ENCODE measurements at regions of chr13 and their contacts with region 1.

Region 1: DNA sequence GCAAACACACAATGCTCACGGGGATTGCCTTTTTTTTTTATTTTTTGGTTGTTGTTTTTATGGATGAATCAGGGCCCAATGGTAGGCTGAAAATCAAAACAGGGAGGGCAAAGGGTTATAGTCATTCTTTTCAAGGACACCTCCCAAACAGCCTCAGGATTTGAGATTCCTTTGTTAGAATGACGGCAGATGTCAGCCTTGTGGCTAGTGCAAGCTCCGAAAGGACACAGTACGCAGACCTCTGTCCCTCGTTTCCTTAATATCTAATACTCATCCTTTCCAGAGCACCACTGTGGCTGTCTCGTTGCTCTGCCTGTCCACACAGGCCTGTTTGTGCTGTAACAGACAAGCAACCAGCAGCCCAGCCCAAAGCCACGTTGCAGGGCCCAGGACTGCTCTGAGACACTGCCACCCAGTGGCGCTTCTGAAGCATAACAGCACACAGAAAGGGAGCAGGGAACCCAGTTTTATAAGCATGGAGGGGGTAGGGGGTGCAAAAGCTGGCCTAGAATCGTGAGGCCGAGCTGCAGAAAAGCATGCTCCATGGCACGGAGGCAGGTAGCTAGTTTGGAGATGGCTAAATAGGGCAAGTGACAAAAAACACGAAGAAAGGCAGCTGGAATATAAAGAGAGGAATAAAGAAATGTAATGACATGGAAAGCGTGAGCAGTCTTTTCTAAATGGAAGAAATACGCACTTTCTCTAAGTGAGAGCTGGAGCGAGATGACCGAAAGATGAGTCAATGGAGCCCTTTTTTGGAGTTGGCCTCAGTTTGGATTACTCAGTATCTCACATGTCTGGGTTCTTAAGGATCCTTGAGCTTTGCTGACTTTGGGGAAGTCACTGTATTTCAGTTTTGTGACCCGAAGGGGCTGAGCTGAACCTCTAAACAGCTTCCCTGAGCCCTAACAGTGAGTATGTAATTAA is 40.7 kb upstream of the MEDAG start:
- DNase-seq: no peak
- H3K4me3 ChIP-seq: peak overlapping the region in 2 of 4 donors; percentile 4 to 18
- H3K27ac ChIP-seq: peak overlapping the region; percentile 84 to 90 (median 89)
- H3K4me1 ChIP-seq: peaks cover 33 to 62% (median 60%) of the 10 kb centered on the region in 4 donors
- H3K27me3 ChIP-seq: no peaks in the 10 kb centered on the region
- CTCF ChIP-seq: peak; percentile 92 to 95 (median 95)
- EP300 ChIP-seq: no peak
- POLR2A ChIP-seq: no peak

Region 2: DNA sequence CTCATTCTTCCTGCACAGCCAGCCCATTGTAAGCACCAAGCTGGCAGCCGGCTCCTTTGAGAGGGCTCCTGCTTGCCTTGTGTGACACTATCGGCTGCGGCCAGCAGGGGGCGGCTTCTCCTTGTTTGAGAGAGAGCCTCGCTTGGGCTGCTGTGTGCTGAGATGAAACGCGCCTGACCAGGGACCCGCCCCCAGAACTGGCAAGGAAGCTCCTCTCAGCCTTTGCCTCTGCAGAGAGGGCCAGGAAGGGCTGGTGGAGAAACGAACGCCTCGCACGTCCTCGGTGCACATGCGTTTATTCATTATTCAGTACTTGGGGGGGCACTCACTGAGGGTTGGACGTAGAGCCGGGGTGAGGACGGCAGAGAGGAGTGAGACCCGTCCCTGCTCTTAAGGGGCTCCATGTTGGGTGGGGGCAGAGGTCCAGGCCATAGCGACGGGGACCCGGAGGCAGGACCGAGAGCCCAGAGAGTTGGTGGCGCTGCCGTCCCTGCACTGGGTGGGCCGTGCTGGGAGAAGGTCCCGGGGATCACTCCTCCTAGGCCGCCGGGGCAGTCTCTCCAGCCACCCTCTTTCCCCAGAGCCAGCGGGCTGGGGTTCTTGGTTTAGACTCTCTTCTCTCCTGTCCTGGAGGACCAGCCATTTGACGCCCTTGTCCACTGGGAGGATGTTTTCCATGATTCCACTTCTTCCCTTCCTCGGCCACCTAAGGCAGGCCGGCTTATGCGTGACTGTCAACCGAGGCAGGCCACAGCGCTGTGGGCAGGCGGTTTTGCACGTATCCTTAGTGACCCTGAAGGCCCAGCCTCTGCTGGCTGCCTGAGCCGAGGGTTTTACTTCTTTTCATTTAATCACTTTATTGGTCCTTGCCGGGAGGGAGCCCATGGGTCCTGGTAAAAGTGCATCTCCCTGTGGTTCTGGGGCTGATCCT is 732.5 kb before region 1 on chr13:
- intact Hi-C with region 1: loop called (anchors 10 kb)
- DNase-seq: peak; percentile 99
- H3K4me3 ChIP-seq: peak overlapping the region in 2 of 4 donors; percentile 14 to 27
- H3K27ac ChIP-seq: no peak overlapping the region
- H3K4me1 ChIP-seq: peaks cover 6 to 22% (median 17%) of the 10 kb centered on the region in 4 donors
- H3K27me3 ChIP-seq: no peaks in the 10 kb centered on the region
- CTCF ChIP-seq: peak; percentile 94 to 95 (median 95)
- EP300 ChIP-seq: no peak
- POLR2A ChIP-seq: no peak

Region 3: GRCh38 chr13:30408319-30409101 is 456.9 kb before region 1 on chr13:
- intact Hi-C with region 1: loop called (anchors 10 kb)
- DNase-seq: peak; percentile 98
- H3K4me3 ChIP-seq: peak overlapping the region; percentile 48 to 52 (median 50)
- H3K27ac ChIP-seq: peak overlapping the region; percentile 81 to 91 (median 86)
- H3K4me1 ChIP-seq: peaks cover 11 to 49% (median 36%) of the 10 kb centered on the region in 4 donors
- H3K27me3 ChIP-seq: no peaks in the 10 kb centered on the region
- CTCF ChIP-seq: peak; percentile 85 to 96 (median 96)
- EP300 ChIP-seq: no peak
- POLR2A ChIP-seq: no peak

Region 4: GRCh38 chr13:30617315-30618185 is 247.8 kb before region 1 on chr13 and contains the start of gene USPL1:
- intact Hi-C with region 1: loop called (anchors 5 kb)
- DNase-seq: peak; percentile 99
- H3K4me3 ChIP-seq: peak within 1 kb of the TSS; percentile 78 to 95 (median 90)
- H3K27ac ChIP-seq: peak within 1 kb of the TSS; percentile 97 to 100 (median 99)
- H3K4me1 ChIP-seq: peaks cover 15 to 40% (median 39%) of the 10 kb centered on the region in 4 donors
- H3K27me3 ChIP-seq: no peaks in the 10 kb centered on the region
- CTCF ChIP-seq: peak in 2 of 3 experiments; percentile 38 to 45
- EP300 ChIP-seq: peak; percentile 23
- POLR2A ChIP-seq: peak; percentile 92
- total RNA-seq, gene USPL1: 13.2 to 21.6 (median 19.4) TPM

Region 5: GRCh38 chr13:30679483-30680330 is 185.7 kb before region 1 on chr13:
- intact Hi-C with region 1: loop called (anchors 5 kb)
- DNase-seq: no peak
- H3K4me3 ChIP-seq: no peak overlapping the region
- H3K27ac ChIP-seq: no peak overlapping the region
- H3K4me1 ChIP-seq: peaks cover 0 to 14% (median 10%) of the 10 kb centered on the region in 4 donors
- H3K27me3 ChIP-seq: no peaks in the 10 kb centered on the region
- CTCF ChIP-seq: peak; percentile 57 to 67 (median 64)
- EP300 ChIP-seq: no peak
- POLR2A ChIP-seq: no peak

Region 6: GRCh38 chr13:30796132-30796572 is 69.2 kb before region 1 on chr13:
- intact Hi-C with region 1: no loop called
- DNase-seq: no peak
- H3K4me3 ChIP-seq: peak overlapping the region; percentile 21 to 37 (median 24)
- H3K27ac ChIP-seq: peak overlapping the region in 1 of 4 donors; percentile 16
- H3K4me1 ChIP-seq: peaks cover 0 to 36% (median 33%) of the 10 kb centered on the region in 4 donors
- H3K27me3 ChIP-seq: no peaks in the 10 kb centered on the region
- CTCF ChIP-seq: no peak
- EP300 ChIP-seq: no peak
- POLR2A ChIP-seq: no peak

Region 7: DNA sequence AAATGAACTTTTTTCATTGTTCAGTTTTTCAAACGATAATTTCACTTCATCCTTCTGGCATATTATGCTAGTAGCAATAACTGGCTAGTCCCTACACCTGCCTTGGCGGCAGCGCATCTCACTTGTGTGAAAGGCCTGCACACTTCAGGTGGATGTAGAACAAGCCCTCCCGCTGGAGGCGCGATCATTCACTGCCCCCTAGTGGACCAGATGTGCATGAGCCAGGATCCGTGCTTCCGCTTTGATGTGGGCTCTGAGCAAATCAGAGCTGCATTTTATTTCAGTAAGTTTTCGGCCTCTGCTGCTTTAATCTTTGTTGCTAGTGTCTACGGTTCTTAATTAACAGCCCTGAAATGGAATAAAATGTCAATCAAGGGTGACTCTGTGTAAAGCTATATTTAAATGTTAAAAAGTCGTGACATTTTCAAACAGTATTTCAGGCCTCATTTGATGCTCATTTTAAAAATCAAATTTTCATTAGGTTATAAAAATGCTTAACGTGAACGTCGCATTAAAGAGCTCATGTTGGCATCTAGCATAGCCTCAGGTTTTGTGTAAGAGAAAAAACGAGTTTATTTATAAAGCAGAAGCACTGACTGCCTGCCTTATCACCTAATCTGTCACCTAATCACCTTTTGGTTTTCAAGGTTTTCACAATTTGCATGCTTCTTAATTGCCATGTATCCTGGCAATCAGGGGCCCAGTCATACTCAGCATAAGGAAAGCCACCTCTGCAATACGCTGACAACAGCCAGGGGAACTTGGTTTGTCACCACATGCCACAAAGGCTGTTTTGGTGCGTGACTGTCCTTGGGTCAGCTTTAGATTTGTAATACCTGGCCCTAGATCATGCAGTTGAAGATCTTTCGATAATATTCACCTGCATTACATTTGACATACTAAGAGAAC is 179.2 kb after region 1 on chr13:
- intact Hi-C with region 1: loop called (anchors 5 kb)
- DNase-seq: peak; percentile 97
- H3K4me3 ChIP-seq: no peak overlapping the region
- H3K27ac ChIP-seq: no peak overlapping the region
- H3K4me1 ChIP-seq: peaks cover 23 to 35% (median 30%) of the 10 kb centered on the region in 4 donors
- H3K27me3 ChIP-seq: no peaks in the 10 kb centered on the region
- CTCF ChIP-seq: peak; percentile 82 to 97 (median 89)
- EP300 ChIP-seq: no peak
- POLR2A ChIP-seq: no peak

Region 8: DNA sequence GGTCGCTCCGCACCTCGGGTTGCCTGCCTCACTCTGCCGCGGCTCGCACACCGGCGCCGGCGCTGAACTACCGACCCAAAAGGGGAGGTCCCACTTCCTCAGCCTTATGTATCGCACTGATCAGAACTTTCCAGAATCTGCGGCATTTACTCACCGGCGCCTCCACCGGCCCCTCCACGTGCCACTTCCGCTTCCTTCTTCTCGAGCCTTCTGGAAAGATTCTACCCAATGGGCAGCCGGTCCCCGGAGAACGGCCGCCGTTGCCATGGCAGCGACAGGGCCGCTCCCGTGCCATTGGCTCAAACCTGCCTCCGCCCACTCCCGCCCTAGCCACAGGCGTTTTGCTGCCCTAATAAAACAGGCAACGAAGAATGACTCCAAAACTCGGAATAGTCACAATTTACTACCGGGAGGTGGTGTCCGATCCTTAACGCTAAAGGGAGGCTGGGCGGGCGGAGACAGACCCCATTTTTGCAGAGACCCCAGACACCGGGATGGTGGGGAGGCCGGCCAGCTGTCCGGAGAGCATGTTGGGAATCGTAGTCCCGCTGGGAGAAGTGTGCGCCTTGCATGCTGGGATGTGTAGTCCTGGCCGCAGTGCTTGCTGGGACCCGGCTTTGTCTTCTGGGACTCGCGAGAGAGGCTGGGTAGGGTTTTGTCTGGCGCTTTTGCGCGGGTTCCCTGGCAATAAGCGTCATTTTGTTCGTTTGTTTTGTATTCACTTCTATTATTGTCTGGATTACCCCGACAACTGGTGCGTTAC is 296.6 kb after region 1 on chr13 and contains the start of gene HSPH1:
- intact Hi-C with region 1: loop called (anchors 10 kb)
- DNase-seq: peak; percentile 99
- H3K4me3 ChIP-seq: peak within 1 kb of the TSS; percentile 64 to 87 (median 75)
- H3K27ac ChIP-seq: peak within 1 kb of the TSS; percentile 85 to 95 (median 92)
- H3K4me1 ChIP-seq: peaks cover 15 to 31% (median 29%) of the 10 kb centered on the region in 4 donors
- H3K27me3 ChIP-seq: no peaks in the 10 kb centered on the region
- CTCF ChIP-seq: peak in 2 of 3 experiments; percentile 18 to 35
- EP300 ChIP-seq: no peak
- POLR2A ChIP-seq: peak; percentile 36
- total RNA-seq, gene HSPH1: 33.4 to 48.2 (median 42.1) TPM

Measured in esophagus muscularis mucosa (tissue), 4 donors.